ENCODE measurements at regions of chr6 and their contacts with region 1.

Region 1: GRCh38 chr6:144334131-144334708 is 49.1 kb downstream of the UTRN start:
- DNase-seq: peak; percentile 42 to 94 (median 78)
- ATAC-seq: peak; percentile 93
- H3K4me3 ChIP-seq: peak overlapping the region; percentile 51 to 52
- H3K4me3 Mint-ChIP-seq: peak overlapping the region; percentile 86
- H3K27ac ChIP-seq: peak overlapping the region; percentile 65 to 90
- H3K27ac Mint-ChIP-seq: peak overlapping the region; percentile 98
- H3K4me1 ChIP-seq: peaks cover 47% of the 10 kb centered on the region
- H3K4me1 Mint-ChIP-seq: peaks cover 53% of the 10 kb centered on the region
- H3K27me3 ChIP-seq: no peaks in the 10 kb centered on the region
- H3K27me3 Mint-ChIP-seq: no peaks in the 10 kb centered on the region
- CTCF ChIP-seq: no peak

Region 2: DNA sequence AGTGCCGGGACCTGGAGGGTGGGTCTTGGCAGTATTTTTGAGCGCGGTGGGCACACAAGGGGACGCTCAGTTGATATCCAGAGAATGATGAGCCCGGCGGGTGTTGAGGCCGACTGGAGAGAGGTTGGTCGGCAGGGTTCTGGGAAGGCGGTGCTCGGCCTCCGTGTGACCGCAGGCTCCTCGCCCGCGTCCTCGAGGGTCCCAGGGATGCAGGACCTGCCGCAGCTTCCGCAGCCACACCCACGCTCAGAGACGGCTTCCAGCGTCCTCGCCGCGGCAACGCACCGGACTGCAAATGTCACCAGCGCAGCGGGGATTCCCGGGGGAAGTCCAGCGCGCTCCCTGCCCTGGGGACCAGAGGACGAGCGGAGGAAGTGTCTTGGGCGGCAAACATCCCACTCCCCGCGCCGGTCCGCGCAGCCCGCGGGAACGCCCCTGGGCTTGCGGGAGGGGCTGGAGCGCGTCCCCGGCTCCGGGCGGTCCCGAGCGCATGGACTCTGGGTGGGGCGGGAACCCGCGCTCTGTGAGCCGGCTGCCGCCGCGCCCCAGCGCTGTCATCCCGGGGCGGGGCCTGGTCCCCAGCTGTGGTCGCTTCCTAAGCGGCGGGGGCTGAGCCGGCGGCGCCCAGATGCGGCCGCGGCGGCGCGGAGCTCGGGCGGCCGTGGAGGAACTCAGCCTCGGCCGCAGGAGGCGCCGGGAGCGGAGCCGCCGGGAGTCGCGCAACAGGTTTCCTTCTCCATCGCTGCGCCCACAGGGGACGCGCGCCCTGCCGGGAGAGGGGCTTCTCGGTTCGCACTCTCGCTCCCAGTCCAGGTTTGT is 184.1 kb before region 1 on chr6 and contains the start of gene STX11:
- CTCF ChIA-PET with region 1: no interaction called
- POLR2A ChIA-PET with region 1: no interaction called
- intact Hi-C with region 1: loop called in 1 of 2 experiments (anchors 5 kb)
- DNase-seq: peak; percentile 27 to 89 (median 67)
- ATAC-seq: peak; percentile 56
- H3K4me3 ChIP-seq: peak within 1 kb of the TSS; percentile 68 to 71
- H3K4me3 Mint-ChIP-seq: peak within 1 kb of the TSS; percentile 94
- H3K27ac ChIP-seq: peak within 1 kb of the TSS; percentile 66 to 90
- H3K27ac Mint-ChIP-seq: peak within 1 kb of the TSS; percentile 95
- H3K4me1 ChIP-seq: peaks cover 5% of the 10 kb centered on the region
- H3K4me1 Mint-ChIP-seq: peaks cover 19% of the 10 kb centered on the region
- H3K27me3 ChIP-seq: no peaks in the 10 kb centered on the region
- H3K27me3 Mint-ChIP-seq: no peaks in the 10 kb centered on the region
- CTCF ChIP-seq: no peak
- total RNA-seq, gene STX11: 17.7 to 18.9 TPM

Region 3: GRCh38 chr6:144284783-144285547 is 49.3 kb before region 1 on chr6 and contains the start of gene UTRN:
- CTCF ChIA-PET with region 1: no interaction called
- POLR2A ChIA-PET with region 1: no interaction called
- intact Hi-C with region 1: loop called (anchors 5 kb)
- DNase-seq: peak in 7 of 9 experiments; percentile 19 to 64 (median 28)
- ATAC-seq: peak; percentile 47
- H3K4me3 ChIP-seq: peak within 1 kb of the TSS; percentile 85 to 89
- H3K4me3 Mint-ChIP-seq: peak within 1 kb of the TSS; percentile 91
- H3K27ac ChIP-seq: peak within 1 kb of the TSS in 1 of 2 experiments; percentile 29
- H3K27ac Mint-ChIP-seq: peak within 1 kb of the TSS; percentile 41
- H3K4me1 ChIP-seq: peaks cover 8% of the 10 kb centered on the region
- H3K4me1 Mint-ChIP-seq: peaks cover 18% of the 10 kb centered on the region
- H3K27me3 ChIP-seq: no peaks in the 10 kb centered on the region
- H3K27me3 Mint-ChIP-seq: peaks cover 6% of the 10 kb centered on the region
- CTCF ChIP-seq: no peak
- total RNA-seq, gene UTRN: 125 to 130 TPM

Region 4: DNA sequence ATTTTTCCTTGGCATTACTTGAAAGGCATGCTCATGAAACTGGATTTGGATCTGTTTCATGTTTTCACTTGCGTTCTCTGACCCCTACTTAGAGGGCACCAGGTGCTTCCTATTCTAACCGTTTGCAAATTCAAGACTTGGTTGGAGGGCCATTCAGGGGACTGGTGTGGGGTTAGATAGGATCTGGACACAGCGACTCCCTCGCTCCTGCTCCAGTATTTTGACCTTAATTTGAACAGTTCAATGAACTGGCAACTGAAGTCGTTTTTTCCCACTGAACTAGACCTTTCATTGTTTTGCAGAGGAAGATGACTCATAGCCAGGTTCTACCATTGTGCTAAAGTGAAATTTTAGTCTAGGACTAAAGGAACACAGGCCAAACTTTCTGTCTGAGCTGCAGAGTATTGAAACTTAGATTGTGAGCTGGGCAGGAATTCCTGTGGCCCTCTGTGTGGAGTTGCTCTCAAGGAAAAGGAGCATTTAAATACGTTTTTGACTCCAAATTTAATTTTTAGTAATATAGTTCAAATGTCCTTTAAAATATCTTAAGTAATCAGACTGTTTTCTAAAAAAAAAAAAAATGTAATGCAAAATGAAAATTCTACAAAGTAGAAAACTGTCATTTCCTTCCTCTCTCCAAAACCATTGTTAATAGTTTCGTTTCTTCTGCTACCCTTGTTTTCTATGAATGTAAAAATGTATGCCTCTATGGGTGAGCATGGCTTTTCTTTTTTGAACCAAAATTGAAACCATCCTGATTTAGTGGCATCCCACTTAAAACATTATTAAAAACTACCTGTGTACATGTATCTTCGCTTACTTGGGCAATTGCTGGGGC is 15.7 kb after region 1 on chr6:
- CTCF ChIA-PET with region 1: interaction called, 4 read pairs
- POLR2A ChIA-PET with region 1: interaction called, 24 read pairs
- intact Hi-C with region 1: loop called in 1 of 2 experiments (anchors 2 kb)
- DNase-seq: peak in 2 of 9 experiments; percentile 52 to 67
- ATAC-seq: peak; percentile 53
- H3K4me3 ChIP-seq: peak overlapping the region; percentile 8 to 29
- H3K4me3 Mint-ChIP-seq: peak overlapping the region; percentile 74
- H3K27ac ChIP-seq: peak overlapping the region; percentile 40 to 88
- H3K27ac Mint-ChIP-seq: peak overlapping the region; percentile 93
- H3K4me1 ChIP-seq: peaks cover 81% of the 10 kb centered on the region
- H3K4me1 Mint-ChIP-seq: peaks cover 90% of the 10 kb centered on the region
- H3K27me3 ChIP-seq: no peaks in the 10 kb centered on the region
- H3K27me3 Mint-ChIP-seq: no peaks in the 10 kb centered on the region
- CTCF ChIP-seq: no peak

Region 5: GRCh38 chr6:144377586-144378210 is 43.5 kb after region 1 on chr6:
- CTCF ChIA-PET with region 1: no interaction called
- POLR2A ChIA-PET with region 1: no interaction called
- intact Hi-C with region 1: loop called in 1 of 2 experiments (anchors 5 kb)
- DNase-seq: no peak
- ATAC-seq: peak; percentile 44
- H3K4me3 ChIP-seq: no peak overlapping the region
- H3K4me3 Mint-ChIP-seq: no peak overlapping the region
- H3K27ac ChIP-seq: no peak overlapping the region
- H3K27ac Mint-ChIP-seq: peak overlapping the region; percentile 6
- H3K4me1 ChIP-seq: peaks cover 18% of the 10 kb centered on the region
- H3K4me1 Mint-ChIP-seq: peaks cover 67% of the 10 kb centered on the region
- H3K27me3 ChIP-seq: no peaks in the 10 kb centered on the region
- H3K27me3 Mint-ChIP-seq: no peaks in the 10 kb centered on the region
- CTCF ChIP-seq: no peak

Region 6: GRCh38 chr6:144415014-144415413 is 80.8 kb after region 1 on chr6:
- CTCF ChIA-PET with region 1: no interaction called
- POLR2A ChIA-PET with region 1: no interaction called
- intact Hi-C with region 1: no loop called
- DNase-seq: no peak
- ATAC-seq: no peak
- H3K4me3 ChIP-seq: no peak overlapping the region
- H3K4me3 Mint-ChIP-seq: no peak overlapping the region
- H3K27ac ChIP-seq: no peak overlapping the region
- H3K27ac Mint-ChIP-seq: no peak overlapping the region
- H3K4me1 ChIP-seq: peaks cover 21% of the 10 kb centered on the region
- H3K4me1 Mint-ChIP-seq: peaks cover 67% of the 10 kb centered on the region
- H3K27me3 ChIP-seq: no peaks in the 10 kb centered on the region
- H3K27me3 Mint-ChIP-seq: no peaks in the 10 kb centered on the region
- CTCF ChIP-seq: no peak

Region 7: DNA sequence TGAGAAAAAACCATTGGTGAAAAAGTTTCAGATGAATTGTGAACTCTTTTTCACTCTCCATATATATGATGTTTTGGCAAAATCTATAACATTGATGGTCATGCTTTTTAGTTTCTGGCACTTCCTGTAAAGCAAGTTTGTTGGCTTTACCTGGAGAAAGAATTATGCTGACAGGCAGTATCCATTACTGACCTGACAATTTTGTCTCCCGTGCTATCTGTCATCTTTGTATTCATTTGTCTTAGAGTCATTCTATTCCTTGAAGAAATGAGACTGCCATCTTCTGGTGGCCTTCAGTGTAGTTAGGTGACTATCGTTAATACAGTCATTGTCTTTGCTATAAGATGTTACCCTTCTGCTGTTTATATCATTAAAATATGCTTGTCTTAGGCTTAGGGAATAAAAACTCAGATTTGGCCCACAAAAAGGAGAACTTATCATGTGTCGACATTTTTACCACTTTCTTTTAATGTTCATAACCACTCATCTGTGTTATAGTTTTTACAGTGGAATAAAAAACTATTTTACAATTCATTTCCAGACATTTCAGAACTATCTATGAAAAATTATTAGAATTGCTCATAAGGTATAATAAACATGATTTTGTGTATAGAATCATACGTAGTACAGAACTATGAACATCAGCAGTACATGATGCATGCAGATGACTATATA is 694.1 kb after region 1 on chr6:
- CTCF ChIA-PET with region 1: no interaction called
- POLR2A ChIA-PET with region 1: no interaction called
- intact Hi-C with region 1: no loop called
- DNase-seq: peak in 2 of 9 experiments; percentile 26 to 37
- ATAC-seq: no peak
- H3K4me3 ChIP-seq: no peak overlapping the region
- H3K4me3 Mint-ChIP-seq: no peak overlapping the region
- H3K27ac ChIP-seq: no peak overlapping the region
- H3K27ac Mint-ChIP-seq: no peak overlapping the region
- H3K4me1 ChIP-seq: no peaks in the 10 kb centered on the region
- H3K4me1 Mint-ChIP-seq: peaks cover 2% of the 10 kb centered on the region
- H3K27me3 ChIP-seq: peaks cover 0 to 2% of the 10 kb centered on the region in 2 experiments
- H3K27me3 Mint-ChIP-seq: peaks cover 9% of the 10 kb centered on the region
- CTCF ChIP-seq: no peak

Region 8: GRCh38 chr6:145071836-145072235 is 737.6 kb after region 1 on chr6:
- CTCF ChIA-PET with region 1: no interaction called
- POLR2A ChIA-PET with region 1: no interaction called
- intact Hi-C with region 1: no loop called
- DNase-seq: no peak
- ATAC-seq: no peak
- H3K4me3 ChIP-seq: no peak overlapping the region
- H3K4me3 Mint-ChIP-seq: no peak overlapping the region
- H3K27ac ChIP-seq: no peak overlapping the region
- H3K27ac Mint-ChIP-seq: no peak overlapping the region
- H3K4me1 ChIP-seq: no peaks in the 10 kb centered on the region
- H3K4me1 Mint-ChIP-seq: no peaks in the 10 kb centered on the region
- H3K27me3 ChIP-seq: no peaks in the 10 kb centered on the region
- H3K27me3 Mint-ChIP-seq: peaks cover 14% of the 10 kb centered on the region
- CTCF ChIP-seq: no peak

Measured in CD8-positive, alpha-beta T cell (primary cell).